ENCODE measurements at regions of chr4 and their contacts with region 1.

Region 1: DNA sequence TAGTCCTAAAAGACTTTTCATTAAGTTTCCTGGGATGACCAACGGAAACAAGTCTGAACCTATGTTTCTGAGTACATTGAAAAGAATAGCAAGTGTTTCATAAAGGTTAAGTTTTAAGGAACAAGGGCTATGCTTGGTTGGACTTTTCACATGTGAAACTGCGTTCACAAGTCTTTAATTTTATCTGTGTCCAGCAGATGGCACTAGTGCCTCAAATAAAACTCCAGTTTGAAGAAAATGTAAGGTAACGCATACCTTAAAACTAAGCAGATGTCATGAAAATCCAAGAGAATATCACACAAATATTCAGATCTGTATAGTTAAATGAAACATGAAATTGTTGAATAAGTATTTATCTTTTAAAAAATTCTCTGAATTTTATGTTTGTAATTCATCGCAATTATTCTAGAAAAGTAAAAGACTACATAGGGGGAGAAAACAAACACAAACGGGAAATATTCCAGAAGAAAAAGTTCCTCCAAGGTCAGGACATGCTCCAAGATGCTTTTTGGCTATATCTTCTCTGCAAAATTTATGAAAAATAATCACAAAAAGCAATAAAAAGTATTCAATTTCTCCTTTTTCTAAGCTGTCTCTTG is 89.6 kb upstream of the MAD2L1 start:
- DNase-seq: peak in 7 of 14 experiments; percentile 3 to 81 (median 53)
- ATAC-seq: peak; percentile 55
- H3K4me3 ChIP-seq: no peak overlapping the region
- H3K4me3 Mint-ChIP-seq: no peak overlapping the region
- H3K27ac ChIP-seq: no peak overlapping the region
- H3K27ac Mint-ChIP-seq: no peak overlapping the region
- H3K4me1 ChIP-seq: no peaks in the 10 kb centered on the region
- H3K4me1 Mint-ChIP-seq: no peaks in the 10 kb centered on the region
- H3K27me3 ChIP-seq: no peaks in the 10 kb centered on the region
- H3K27me3 Mint-ChIP-seq: peaks cover 12% of the 10 kb centered on the region
- CTCF ChIP-seq: peak; percentile 86

Region 2: GRCh38 chr4:120018786-120019185 is 137.4 kb before region 1 on chr4:
- CTCF ChIA-PET with region 1: no interaction called
- POLR2A ChIA-PET with region 1: no interaction called
- intact Hi-C with region 1: no loop called
- DNase-seq: no peak
- ATAC-seq: no peak
- H3K4me3 ChIP-seq: no peak overlapping the region
- H3K4me3 Mint-ChIP-seq: no peak overlapping the region
- H3K27ac ChIP-seq: no peak overlapping the region
- H3K27ac Mint-ChIP-seq: no peak overlapping the region
- H3K4me1 ChIP-seq: no peaks in the 10 kb centered on the region
- H3K4me1 Mint-ChIP-seq: no peaks in the 10 kb centered on the region
- H3K27me3 ChIP-seq: peaks cover 0 to 7% of the 10 kb centered on the region in 2 experiments
- H3K27me3 Mint-ChIP-seq: peaks cover 39% of the 10 kb centered on the region
- CTCF ChIP-seq: no peak

Region 3: DNA sequence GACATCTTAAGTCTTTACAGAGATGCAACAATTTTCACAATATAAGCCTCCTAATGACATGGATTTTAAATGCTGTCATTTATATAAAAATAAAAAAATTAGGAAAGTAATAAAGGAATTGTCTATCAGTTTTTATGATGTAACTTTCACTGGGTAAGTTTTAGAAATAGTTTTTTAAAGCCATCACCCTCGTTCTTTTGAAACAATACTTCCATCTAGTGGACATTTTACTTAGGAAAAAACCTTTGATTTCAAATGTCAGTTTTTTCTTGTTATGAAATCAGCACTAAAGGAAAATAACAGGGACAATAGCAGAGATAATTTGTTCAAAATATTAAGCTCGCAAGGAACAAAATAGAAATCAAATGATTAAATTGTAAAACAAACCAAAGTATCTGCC is 940.4 kb after region 1 on chr4:
- CTCF ChIA-PET with region 1: no interaction called
- POLR2A ChIA-PET with region 1: no interaction called
- intact Hi-C with region 1: loop called (anchors 1 kb)
- DNase-seq: peak in 3 of 14 experiments; percentile 38 to 52 (median 41)
- ATAC-seq: no peak
- H3K4me3 ChIP-seq: no peak overlapping the region
- H3K4me3 Mint-ChIP-seq: no peak overlapping the region
- H3K27ac ChIP-seq: no peak overlapping the region
- H3K27ac Mint-ChIP-seq: no peak overlapping the region
- H3K4me1 ChIP-seq: no peaks in the 10 kb centered on the region
- H3K4me1 Mint-ChIP-seq: no peaks in the 10 kb centered on the region
- H3K27me3 ChIP-seq: no peaks in the 10 kb centered on the region
- H3K27me3 Mint-ChIP-seq: no peaks in the 10 kb centered on the region
- CTCF ChIP-seq: peak; percentile 77

Region 4: DNA sequence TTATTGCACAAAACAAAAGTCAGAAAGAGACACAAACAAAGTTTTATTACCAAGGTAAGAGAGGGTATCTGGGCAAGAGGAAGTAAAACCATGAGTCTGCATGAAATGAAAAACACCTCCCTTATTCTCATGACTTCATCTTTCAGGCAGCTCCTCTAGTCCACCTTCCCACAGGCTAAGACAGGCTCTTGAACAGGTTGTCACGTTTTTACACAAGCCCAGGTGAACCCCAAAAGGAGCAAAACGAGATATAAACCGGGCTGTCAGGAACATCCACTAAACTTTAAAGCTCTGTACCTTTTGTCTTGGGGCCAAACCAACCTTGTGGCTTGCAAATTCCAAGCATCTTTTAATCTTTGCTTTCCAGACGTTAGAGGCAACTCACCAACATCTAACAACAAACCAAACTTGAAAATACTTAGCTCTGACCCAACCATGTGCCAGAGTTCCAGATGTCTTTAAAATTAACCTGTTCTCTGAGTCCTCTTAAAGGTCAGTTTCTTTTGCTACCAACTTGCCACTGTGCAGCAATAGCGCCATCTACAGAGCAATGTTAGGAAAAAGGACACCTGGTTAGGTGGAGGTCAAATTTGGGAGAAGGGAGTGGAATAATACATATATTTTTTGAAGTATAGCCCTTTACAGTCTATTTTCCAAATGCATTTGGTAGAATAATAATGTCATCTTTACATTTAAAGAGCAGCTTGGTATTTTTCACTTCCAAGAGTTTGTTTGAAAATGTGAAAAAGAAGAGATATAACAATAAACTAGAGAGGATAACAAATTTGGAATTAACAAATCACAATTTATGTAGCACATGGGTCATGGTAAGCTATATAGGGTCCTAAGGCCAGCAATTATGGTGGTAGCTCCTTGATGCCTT is 1151.5 kb after region 1 on chr4:
- CTCF ChIA-PET with region 1: interaction called, 3 read pairs
- POLR2A ChIA-PET with region 1: no interaction called
- intact Hi-C with region 1: loop called (anchors 1 to 2 kb)
- DNase-seq: peak in 10 of 14 experiments; percentile 2 to 77 (median 26)
- ATAC-seq: no peak
- H3K4me3 ChIP-seq: no peak overlapping the region
- H3K4me3 Mint-ChIP-seq: no peak overlapping the region
- H3K27ac ChIP-seq: no peak overlapping the region
- H3K27ac Mint-ChIP-seq: no peak overlapping the region
- H3K4me1 ChIP-seq: peaks cover 5% of the 10 kb centered on the region
- H3K4me1 Mint-ChIP-seq: peaks cover 15% of the 10 kb centered on the region
- H3K27me3 ChIP-seq: no peaks in the 10 kb centered on the region
- H3K27me3 Mint-ChIP-seq: peaks cover 4% of the 10 kb centered on the region
- CTCF ChIP-seq: peak; percentile 81

Region 5: GRCh38 chr4:121726642-121727268 is 1570.5 kb after region 1 on chr4:
- CTCF ChIA-PET with region 1: no interaction called
- POLR2A ChIA-PET with region 1: no interaction called
- intact Hi-C with region 1: loop called in 1 of 2 experiments (anchors 2 kb)
- DNase-seq: peak in 3 of 14 experiments; percentile 66 to 68 (median 67)
- ATAC-seq: peak; percentile 85
- H3K4me3 ChIP-seq: no peak overlapping the region
- H3K4me3 Mint-ChIP-seq: no peak overlapping the region
- H3K27ac ChIP-seq: no peak overlapping the region
- H3K27ac Mint-ChIP-seq: no peak overlapping the region
- H3K4me1 ChIP-seq: no peaks in the 10 kb centered on the region
- H3K4me1 Mint-ChIP-seq: no peaks in the 10 kb centered on the region
- H3K27me3 ChIP-seq: no peaks in the 10 kb centered on the region
- H3K27me3 Mint-ChIP-seq: no peaks in the 10 kb centered on the region
- CTCF ChIP-seq: peak; percentile 69